Left lung (tissue), 14 donors: ENCODE measurements at regions of chr6 and their contacts with region 1.

Region 1: GRCh38 chr6:29847871-29848630 is 20.4 kb downstream of the HLA-G start:
- DNase-seq: peak; percentile 57 to 96 (median 75)
- ATAC-seq: peak; percentile 96
- H3K4me3 ChIP-seq: no peak overlapping the region
- H3K27ac ChIP-seq: no peak overlapping the region
- H3K4me1 ChIP-seq: peaks cover 0 to 8% of the 10 kb centered on the region in 2 donors
- H3K27me3 ChIP-seq: peaks cover 22 to 91% of the 10 kb centered on the region in 2 donors
- CTCF ChIP-seq: peak; percentile 89 to 90

Region 2: DNA sequence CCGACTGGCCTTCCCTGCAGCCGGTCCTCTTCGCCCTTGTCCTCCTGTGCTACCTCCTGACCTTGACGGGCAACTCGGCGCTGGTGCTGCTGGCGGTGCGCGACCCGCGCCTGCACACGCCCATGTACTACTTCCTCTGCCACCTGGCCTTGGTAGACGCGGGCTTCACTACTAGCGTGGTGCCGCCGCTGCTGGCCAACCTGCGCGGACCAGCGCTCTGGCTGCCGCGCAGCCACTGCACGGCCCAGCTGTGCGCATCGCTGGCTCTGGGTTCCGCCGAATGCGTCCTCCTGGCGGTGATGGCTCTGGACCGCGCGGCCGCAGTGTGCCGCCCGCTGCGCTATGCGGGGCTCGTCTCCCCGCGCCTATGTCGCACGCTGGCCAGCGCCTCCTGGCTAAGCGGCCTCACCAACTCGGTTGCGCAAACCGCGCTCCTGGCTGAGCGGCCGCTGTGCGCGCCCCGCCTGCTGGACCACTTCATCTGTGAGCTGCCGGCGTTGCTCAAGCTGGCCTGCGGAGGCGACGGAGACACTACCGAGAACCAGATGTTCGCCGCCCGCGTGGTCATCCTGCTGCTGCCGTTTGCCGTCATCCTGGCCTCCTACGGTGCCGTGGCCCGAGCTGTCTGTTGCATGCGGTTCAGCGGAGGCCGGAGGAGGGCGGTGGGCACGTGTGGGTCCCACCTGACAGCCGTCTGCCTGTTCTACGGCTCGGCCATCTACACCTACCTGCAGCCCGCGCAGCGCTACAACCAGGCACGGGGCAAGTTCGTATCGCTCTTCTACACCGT is 294.6 kb before region 1 on chr6:
- intact Hi-C with region 1: no loop called
- DNase-seq: peak; percentile 71 to 91 (median 84)
- ATAC-seq: peak; percentile 95
- H3K4me3 ChIP-seq: peak overlapping the region; percentile 18 to 37
- H3K27ac ChIP-seq: no peak overlapping the region
- H3K4me1 ChIP-seq: peaks cover 7 to 15% of the 10 kb centered on the region in 2 donors
- H3K27me3 ChIP-seq: peaks cover 22 to 52% of the 10 kb centered on the region in 2 donors
- CTCF ChIP-seq: no peak

Region 3: DNA sequence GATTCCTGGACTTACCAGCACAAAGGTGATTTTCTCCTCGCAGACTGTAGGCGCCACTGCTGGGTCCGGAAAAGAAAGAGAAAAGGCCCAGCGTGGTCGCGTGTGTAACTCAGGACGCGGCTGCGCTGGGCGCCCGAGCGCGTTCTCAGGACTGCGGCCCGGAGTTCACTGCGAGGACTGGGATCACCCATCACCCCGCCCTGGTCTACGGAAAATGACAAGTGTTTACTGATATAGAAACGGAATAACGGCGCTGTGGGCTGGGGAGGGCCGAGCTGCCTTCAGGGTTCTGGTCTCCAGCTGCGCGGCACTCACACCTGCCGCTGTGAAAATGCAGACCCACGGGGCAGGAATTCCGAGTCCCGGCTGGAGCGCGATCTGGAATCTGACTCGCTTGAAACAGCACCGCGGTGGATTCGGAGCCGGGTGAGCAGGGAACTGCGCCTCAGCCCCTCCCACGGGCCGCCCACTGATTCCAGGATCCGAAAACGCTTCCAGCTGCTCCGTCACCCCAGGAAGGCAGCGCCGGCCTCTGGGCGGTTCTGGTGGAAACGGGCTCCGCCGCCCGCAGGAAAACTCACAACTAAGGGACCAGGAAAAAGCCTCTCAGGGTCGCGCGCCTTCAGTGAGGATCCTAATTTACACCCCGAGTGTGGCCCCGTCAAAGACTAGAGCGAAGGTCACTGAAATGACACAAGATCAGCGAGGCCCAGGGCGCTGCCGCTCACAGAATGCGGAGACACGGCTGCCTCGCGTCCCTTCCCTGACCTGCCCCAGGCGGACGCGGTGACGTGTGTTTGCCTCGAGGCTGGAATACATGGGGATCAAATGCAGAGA is 128.8 kb after region 1 on chr6:
- intact Hi-C with region 1: no loop called
- DNase-seq: peak in 3 of 4 donors; percentile 69 to 93 (median 88)
- ATAC-seq: peak; percentile 96
- H3K4me3 ChIP-seq: peak overlapping the region; percentile 37 to 53
- H3K27ac ChIP-seq: peak overlapping the region; percentile 82 to 92
- H3K4me1 ChIP-seq: peaks cover 7 to 36% of the 10 kb centered on the region in 2 donors
- H3K27me3 ChIP-seq: peaks cover 0 to 40% of the 10 kb centered on the region in 2 donors
- CTCF ChIP-seq: no peak

Region 4: DNA sequence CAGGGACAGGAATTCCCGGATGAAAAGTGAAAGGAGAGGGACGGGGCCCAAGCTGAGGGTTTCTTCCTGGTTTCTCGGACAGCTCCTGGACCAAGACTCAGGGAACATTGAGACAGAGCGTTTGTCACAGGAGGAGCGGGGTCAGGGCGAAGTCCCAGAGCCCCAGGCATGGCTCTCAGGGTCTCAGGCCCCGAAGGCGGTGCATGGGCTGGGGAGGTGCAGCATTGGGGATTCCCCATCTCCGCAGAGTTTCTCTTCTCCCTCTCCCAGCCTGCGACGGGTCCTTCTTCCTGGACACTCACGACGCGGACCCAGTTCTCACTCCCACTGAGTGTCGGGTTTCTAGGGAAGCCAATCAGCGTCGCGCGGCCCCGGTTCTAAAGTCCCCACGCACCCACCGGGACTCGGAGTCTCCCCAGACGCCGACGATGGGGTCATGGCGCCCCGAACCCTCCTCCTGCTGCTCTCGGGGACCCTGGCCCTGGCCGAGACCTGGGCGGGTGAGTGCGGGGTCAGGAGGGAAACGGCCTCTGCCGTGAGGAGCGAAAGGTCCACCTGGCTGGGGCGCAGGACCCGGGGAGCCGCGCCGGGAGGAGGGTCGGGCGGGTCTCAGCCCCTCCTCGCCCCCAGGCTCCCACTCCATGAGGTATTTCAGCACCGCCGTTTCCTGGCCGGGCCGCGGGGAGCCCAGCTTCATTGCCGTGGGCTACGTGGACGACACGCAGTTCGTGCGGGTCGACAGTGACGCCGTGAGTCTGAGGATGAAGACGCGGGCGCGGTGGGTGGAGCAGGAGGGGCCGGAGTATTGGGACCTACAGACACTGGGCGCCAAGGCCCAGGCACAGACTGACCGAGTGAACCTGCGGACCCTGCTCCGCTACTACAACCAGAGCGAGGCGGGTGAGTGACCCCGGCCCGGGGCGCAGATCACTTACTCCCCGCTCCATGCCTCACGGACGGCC is 158.4 kb after region 1 on chr6:
- intact Hi-C with region 1: loop called (anchors 5 to 10 kb)
- DNase-seq: peak in 3 of 4 donors; percentile 28 to 81 (median 50)
- ATAC-seq: peak; percentile 79
- H3K4me3 ChIP-seq: peak overlapping the region; percentile 38 to 41
- H3K27ac ChIP-seq: no peak overlapping the region
- H3K4me1 ChIP-seq: peaks cover 7 to 21% of the 10 kb centered on the region in 2 donors
- H3K27me3 ChIP-seq: peaks cover 0 to 38% of the 10 kb centered on the region in 2 donors
- CTCF ChIP-seq: no peak

Region 5: GRCh38 chr6:30013291-30013922 is 165.4 kb after region 1 on chr6:
- intact Hi-C with region 1: loop called (anchors 5 to 10 kb)
- DNase-seq: peak in 1 of 4 donors; percentile 87
- ATAC-seq: peak; percentile 82
- H3K4me3 ChIP-seq: no peak overlapping the region
- H3K27ac ChIP-seq: no peak overlapping the region
- H3K4me1 ChIP-seq: no peaks in the 10 kb centered on the region
- H3K27me3 ChIP-seq: peaks cover 0 to 1% of the 10 kb centered on the region in 2 donors
- CTCF ChIP-seq: peak; percentile 89 to 93